Endothelial cell of umbilical vein (primary cell): ENCODE measurements at regions of chr18 and their contacts with region 1.

Region 1: DNA sequence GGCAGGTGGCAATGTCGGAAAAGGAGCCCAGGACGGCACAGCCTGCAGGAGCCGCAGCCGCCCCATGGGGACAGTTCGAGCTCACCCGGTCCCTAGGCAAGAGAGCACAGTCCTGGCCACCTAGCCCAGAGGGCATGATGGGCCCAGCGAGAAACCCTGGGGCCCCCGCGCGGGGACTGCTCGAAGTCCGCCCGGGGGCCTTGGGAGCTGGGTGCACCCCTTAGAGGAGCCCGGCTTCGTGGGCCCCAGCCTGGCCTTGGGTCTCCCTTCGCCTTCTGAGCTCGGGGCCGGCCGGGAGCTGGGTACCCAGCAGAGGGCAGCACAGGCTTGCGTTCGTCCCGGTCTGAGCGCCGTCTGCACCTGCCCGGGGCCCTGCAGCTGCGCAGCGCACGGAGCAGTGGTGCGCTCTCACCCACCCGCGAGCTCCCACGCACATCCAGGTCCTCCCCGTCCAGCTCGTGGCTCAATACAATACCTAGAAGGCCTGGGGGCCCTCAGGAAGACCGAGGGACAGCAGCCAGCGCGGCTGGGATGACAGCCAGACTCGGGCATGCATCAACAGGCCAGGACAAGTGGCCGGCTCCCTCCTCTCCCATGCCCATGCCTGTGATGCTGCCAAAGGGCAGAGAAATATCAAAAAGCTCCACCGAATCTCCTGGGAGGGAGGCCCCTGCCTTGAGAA is 96.2 kb upstream of the ZNF532 start:
- DNase-seq: peak; percentile 58
- H3K4me3 ChIP-seq: no peak overlapping the region
- H3K27ac ChIP-seq: no peak overlapping the region
- H3K4me1 ChIP-seq: peaks cover 2% of the 10 kb centered on the region
- H3K27me3 ChIP-seq: peaks cover 7 to 25% of the 10 kb centered on the region in 2 experiments
- CTCF ChIP-seq: peak; percentile 86 to 99
- POLR2A ChIP-seq: no peak

Region 2: GRCh38 chr18:58135701-58136331 is 632.6 kb before region 1 on chr18:
- CTCF ChIA-PET with region 1: no interaction called
- POLR2A ChIA-PET with region 1: no interaction called
- dilution Hi-C with region 1: no loop called
- intact Hi-C with region 1: loop called (anchors 10 kb)
- DNase-seq: peak; percentile 69
- H3K4me3 ChIP-seq: no peak overlapping the region
- H3K27ac ChIP-seq: no peak overlapping the region
- H3K4me1 ChIP-seq: peaks cover 2% of the 10 kb centered on the region
- H3K27me3 ChIP-seq: no peaks in the 10 kb centered on the region
- CTCF ChIP-seq: peak; percentile 85 to 91
- POLR2A ChIP-seq: no peak

Region 3: GRCh38 chr18:58529714-58530354 is 238.6 kb before region 1 on chr18:
- CTCF ChIA-PET with region 1: interaction called, 603 read pairs
- POLR2A ChIA-PET with region 1: no interaction called
- dilution Hi-C with region 1: loop called (anchors 25 kb)
- intact Hi-C with region 1: loop called (anchors 1 kb)
- DNase-seq: peak; percentile 49
- H3K4me3 ChIP-seq: no peak overlapping the region
- H3K27ac ChIP-seq: no peak overlapping the region
- H3K4me1 ChIP-seq: no peaks in the 10 kb centered on the region
- H3K27me3 ChIP-seq: peaks cover 6 to 21% of the 10 kb centered on the region in 2 experiments
- CTCF ChIP-seq: peak; percentile 65 to 74
- POLR2A ChIP-seq: no peak

Region 4: DNA sequence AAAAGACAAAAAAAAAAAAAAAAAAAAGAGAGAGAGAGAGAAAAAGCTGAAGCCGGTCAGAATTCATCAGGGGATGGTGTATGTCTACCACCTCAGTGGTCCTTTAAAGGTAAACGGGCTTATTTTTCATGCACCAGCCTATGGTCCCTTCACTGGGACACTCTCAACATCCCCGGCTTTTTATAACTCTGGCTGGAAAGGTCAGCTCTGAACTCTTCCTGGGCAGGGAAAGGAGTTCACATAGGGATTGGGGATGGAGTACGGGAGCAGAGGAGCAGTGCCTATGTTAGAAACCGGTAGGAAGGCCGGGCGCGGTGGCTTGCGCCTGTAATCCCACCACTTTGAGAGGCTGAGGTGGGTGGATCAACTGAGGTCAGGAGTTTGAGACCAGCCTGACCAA is 107.5 kb before region 1 on chr18:
- CTCF ChIA-PET with region 1: interaction called, 15 read pairs
- POLR2A ChIA-PET with region 1: no interaction called
- dilution Hi-C with region 1: no loop called
- intact Hi-C with region 1: no loop called
- DNase-seq: no peak
- H3K4me3 ChIP-seq: no peak overlapping the region
- H3K27ac ChIP-seq: no peak overlapping the region
- H3K4me1 ChIP-seq: no peaks in the 10 kb centered on the region
- H3K27me3 ChIP-seq: peaks cover 6 to 7% of the 10 kb centered on the region in 2 experiments
- CTCF ChIP-seq: no peak
- POLR2A ChIP-seq: no peak

Region 5: GRCh38 chr18:58781627-58782194 is 13.3 kb after region 1 on chr18:
- CTCF ChIA-PET with region 1: interaction called, 21 read pairs
- POLR2A ChIA-PET with region 1: no interaction called
- dilution Hi-C with region 1: no loop called
- intact Hi-C with region 1: loop called (anchors 1 kb)
- DNase-seq: peak; percentile 83
- H3K4me3 ChIP-seq: no peak overlapping the region
- H3K27ac ChIP-seq: no peak overlapping the region
- H3K4me1 ChIP-seq: peaks cover 19% of the 10 kb centered on the region
- H3K27me3 ChIP-seq: no peaks in the 10 kb centered on the region
- CTCF ChIP-seq: peak; percentile 76 to 80
- POLR2A ChIP-seq: no peak

Region 6: GRCh38 chr18:58970943-58971790 is 202.7 kb after region 1 on chr18:
- CTCF ChIA-PET with region 1: no interaction called
- POLR2A ChIA-PET with region 1: no interaction called
- dilution Hi-C with region 1: no loop called
- intact Hi-C with region 1: no loop called
- DNase-seq: no peak
- H3K4me3 ChIP-seq: no peak overlapping the region
- H3K27ac ChIP-seq: no peak overlapping the region
- H3K4me1 ChIP-seq: no peaks in the 10 kb centered on the region
- H3K27me3 ChIP-seq: no peaks in the 10 kb centered on the region
- CTCF ChIP-seq: no peak
- POLR2A ChIP-seq: no peak

Region 7: DNA sequence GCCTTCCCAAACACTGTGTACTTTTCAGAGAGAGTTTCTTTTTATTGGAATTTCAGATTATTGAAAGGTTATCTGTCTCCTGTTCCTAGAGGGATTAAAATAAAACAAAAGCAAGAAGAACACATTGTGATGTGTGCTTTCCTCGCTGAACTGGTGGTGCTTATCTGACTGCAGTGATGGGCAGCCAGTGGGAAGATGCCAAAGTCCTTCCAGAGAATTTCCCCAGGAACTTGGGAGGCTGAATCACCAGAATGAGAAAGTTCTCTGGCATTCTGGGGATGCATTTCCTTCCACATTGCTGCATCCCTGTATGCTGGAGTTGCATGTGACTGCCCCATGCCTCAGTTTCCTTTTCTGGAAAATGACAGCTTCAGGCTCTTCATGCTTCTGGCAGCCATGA is 317.4 kb after region 1 on chr18:
- CTCF ChIA-PET with region 1: interaction called, 24 read pairs
- POLR2A ChIA-PET with region 1: no interaction called
- dilution Hi-C with region 1: no loop called
- intact Hi-C with region 1: no loop called
- DNase-seq: peak; percentile 41
- H3K4me3 ChIP-seq: no peak overlapping the region
- H3K27ac ChIP-seq: no peak overlapping the region
- H3K4me1 ChIP-seq: peaks cover 15% of the 10 kb centered on the region
- H3K27me3 ChIP-seq: peaks cover 0 to 2% of the 10 kb centered on the region in 2 experiments
- CTCF ChIP-seq: no peak
- POLR2A ChIP-seq: no peak